Right ventricle myocardium superior (tissue), 1 donor: ENCODE measurements at regions of chr19 and their contacts with region 1.

Region 1: GRCh38 chr19:49106648-49107135 is 7.5 kb upstream of the LIN7B start:
- DNase-seq: peak; percentile 69
- ATAC-seq: peak; percentile 41

Region 2: GRCh38 chr19:49142866-49143335 is 36.2 kb after region 1 on chr19:
- intact Hi-C with region 1: loop called (anchors 5 kb)
- DNase-seq: peak; percentile 94
- ATAC-seq: peak; percentile 97